ENCODE measurements at regions of chr3 and their contacts with region 1.

Region 1: DNA sequence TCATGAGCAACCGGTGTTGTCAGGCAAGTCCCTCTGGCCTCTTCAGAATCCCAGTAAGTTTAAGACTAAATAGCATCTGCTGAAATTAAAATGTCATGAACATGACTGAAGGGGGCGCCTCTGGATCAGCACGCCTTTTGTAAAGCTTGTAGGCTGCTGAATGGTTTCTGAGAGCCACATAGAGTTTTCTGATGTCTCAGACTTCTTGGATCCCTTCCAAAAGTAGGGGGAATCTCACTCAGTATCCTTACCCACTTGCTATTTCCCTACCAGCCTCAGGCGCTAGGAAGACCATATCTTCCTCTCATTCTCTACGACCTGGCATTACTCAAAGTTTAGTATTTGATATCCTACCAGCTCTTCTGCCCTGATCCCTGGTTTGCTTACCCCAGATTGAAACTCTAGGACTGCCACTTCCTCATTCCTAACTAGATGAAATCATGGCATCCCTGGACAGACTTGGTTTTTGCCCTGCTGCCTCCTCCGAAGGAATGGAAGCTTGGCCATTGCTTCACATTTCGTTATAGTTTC is 62.7 kb upstream of the CD47 start:
- DNase-seq: peak; percentile 66
- H3K4me3 ChIP-seq: no peak overlapping the region
- H3K27ac ChIP-seq: no peak overlapping the region
- H3K4me1 ChIP-seq: peaks cover 0 to 7% (median 0%) of the 10 kb centered on the region in 4 donors
- H3K27me3 ChIP-seq: no peaks in the 10 kb centered on the region
- CTCF ChIP-seq: peak; percentile 36 to 49 (median 42)
- EP300 ChIP-seq: no peak
- POLR2A ChIP-seq: no peak

Region 2: DNA sequence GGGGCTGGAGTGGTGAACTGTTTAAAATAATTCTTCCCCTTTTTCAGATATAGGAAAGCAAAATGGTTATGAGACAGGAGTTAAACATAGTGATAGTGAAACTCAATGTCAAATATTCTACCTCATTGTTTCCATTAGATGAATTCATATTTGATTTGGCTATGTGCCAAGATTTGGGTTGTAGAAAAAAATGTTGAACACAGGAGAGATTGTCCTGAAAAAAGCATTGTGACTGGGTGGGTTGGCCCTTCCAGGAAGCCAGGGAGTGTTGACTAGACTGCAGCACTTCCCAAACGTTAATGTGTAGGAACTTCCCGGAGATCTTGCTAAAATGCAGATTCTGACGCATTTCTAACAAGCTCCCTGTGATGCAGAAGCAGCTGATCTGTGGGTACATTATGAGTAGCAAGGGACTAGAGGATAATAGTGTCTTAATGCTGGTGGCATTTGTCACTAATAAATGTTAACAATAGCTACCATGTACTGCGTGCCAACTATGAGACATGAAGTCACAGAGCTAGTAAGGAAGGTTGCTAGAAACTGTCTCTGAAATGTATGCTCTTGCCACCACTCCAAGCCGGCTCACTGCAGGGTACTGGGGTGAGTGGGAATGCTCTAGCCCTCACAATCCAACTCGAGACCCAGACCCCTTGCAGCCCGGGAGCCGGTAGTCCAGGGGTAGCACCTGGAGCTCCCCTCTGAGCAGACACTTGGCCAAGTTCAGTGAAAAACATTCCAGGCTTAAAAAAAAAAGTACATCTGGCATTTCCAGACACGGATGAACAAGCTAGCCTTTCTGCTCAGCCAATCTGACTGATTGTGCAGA is 183.3 kb before region 1 on chr3:
- in situ Hi-C with region 1: no loop called
- intact Hi-C with region 1: no loop called
- DNase-seq: no peak
- H3K4me3 ChIP-seq: no peak overlapping the region
- H3K27ac ChIP-seq: no peak overlapping the region
- H3K4me1 ChIP-seq: peaks cover 0 to 17% (median 3%) of the 10 kb centered on the region in 4 donors
- H3K27me3 ChIP-seq: no peaks in the 10 kb centered on the region
- CTCF ChIP-seq: no peak
- EP300 ChIP-seq: no peak
- POLR2A ChIP-seq: no peak

Region 3: GRCh38 chr3:108477511-108478147 is 324.1 kb after region 1 on chr3:
- in situ Hi-C with region 1: loop called in 1 of 4 experiments (anchors 10 kb)
- intact Hi-C with region 1: no loop called
- DNase-seq: peak; percentile 79
- H3K4me3 ChIP-seq: no peak overlapping the region
- H3K27ac ChIP-seq: no peak overlapping the region
- H3K4me1 ChIP-seq: peaks cover 0 to 8% (median 4%) of the 10 kb centered on the region in 4 donors
- H3K27me3 ChIP-seq: no peaks in the 10 kb centered on the region
- CTCF ChIP-seq: peak; percentile 61 to 87 (median 70)
- EP300 ChIP-seq: no peak
- POLR2A ChIP-seq: no peak